ENCODE measurements at regions of chr3 and their contacts with region 1.

Region 1: GRCh38 chr3:179929091-179929529 is 107.6 kb downstream of the PEX5L start:
- DNase-seq: peak; percentile 37
- ATAC-seq: peak; percentile 69
- H3K4me3 ChIP-seq: no peak overlapping the region
- H3K27ac ChIP-seq: no peak overlapping the region
- H3K4me1 ChIP-seq: no peaks in the 10 kb centered on the region
- H3K27me3 ChIP-seq: peaks cover 46% of the 10 kb centered on the region
- CTCF ChIP-seq: peak; percentile 41 to 83 (median 79); a peak in 5 of 6 replicates
- POLR2A ChIP-seq: no peak
- RAD21 ChIP-seq: peak; percentile 64

Region 2: GRCh38 chr3:180594631-180595558 is 665.8 kb after region 1 on chr3:
- CTCF ChIA-PET with region 1: interaction called, 19 read pairs
- POLR2A ChIA-PET with region 1: no interaction called
- RAD21 ChIA-PET with region 1: no interaction called
- intact Hi-C with region 1: loop called (anchors 1 kb)
- DNase-seq: peak; percentile 22
- ATAC-seq: peak; percentile 71
- H3K4me3 ChIP-seq: no peak overlapping the region
- H3K27ac ChIP-seq: no peak overlapping the region
- H3K4me1 ChIP-seq: no peaks in the 10 kb centered on the region
- H3K27me3 ChIP-seq: no peaks in the 10 kb centered on the region
- CTCF ChIP-seq: peak; percentile 29 to 49 (median 36); a peak in 4 of 6 replicates
- POLR2A ChIP-seq: no peak
- RAD21 ChIP-seq: peak; percentile 78